ENCODE measurements at regions of chr13 and their contacts with region 1.

Region 1: GRCh38 chr13:99057310-99057975 is 79.6 kb upstream of the DOCK9 start:
- DNase-seq: peak; percentile 89
- H3K4me3 Mint-ChIP-seq: no peak overlapping the region
- H3K27ac Mint-ChIP-seq: peak overlapping the region; percentile 59
- H3K4me1 Mint-ChIP-seq: peaks cover 47% of the 10 kb centered on the region
- H3K27me3 Mint-ChIP-seq: no peaks in the 10 kb centered on the region
- CTCF ChIP-seq: no peak

Region 2: GRCh38 chr13:99045396-99045795 is 12.0 kb before region 1 on chr13:
- CTCF ChIA-PET with region 1: interaction called, 3 read pairs
- POLR2A ChIA-PET with region 1: interaction called, 41 read pairs
- intact Hi-C with region 1: no loop called
- DNase-seq: no peak
- H3K4me3 Mint-ChIP-seq: peak overlapping the region; percentile 13
- H3K27ac Mint-ChIP-seq: peak overlapping the region; percentile 90
- H3K4me1 Mint-ChIP-seq: peaks cover 45% of the 10 kb centered on the region
- H3K27me3 Mint-ChIP-seq: no peaks in the 10 kb centered on the region
- CTCF ChIP-seq: no peak

Region 3: DNA sequence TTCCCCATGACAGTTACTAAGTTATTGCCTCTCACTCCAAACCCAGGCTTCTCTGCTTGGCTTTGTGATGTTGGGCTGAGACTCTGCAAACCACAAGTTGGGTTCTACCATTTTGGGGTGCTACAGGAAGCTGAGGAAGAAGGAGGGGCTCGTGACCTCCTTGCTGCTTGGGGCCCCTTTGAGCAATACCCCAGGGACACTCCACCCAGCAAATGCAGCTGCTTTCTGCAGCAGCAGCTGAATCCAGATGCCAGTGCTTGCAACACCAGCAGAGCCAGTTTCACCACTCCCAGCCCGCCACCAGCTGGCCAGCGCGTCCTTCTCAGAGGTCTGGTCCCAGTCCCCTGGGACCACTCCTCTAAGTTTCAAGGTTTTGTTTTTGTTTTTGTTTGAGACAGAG is 121.2 kb after region 1 on chr13:
- CTCF ChIA-PET with region 1: no interaction called
- POLR2A ChIA-PET with region 1: no interaction called
- intact Hi-C with region 1: no loop called
- DNase-seq: no peak
- H3K4me3 Mint-ChIP-seq: no peak overlapping the region
- H3K27ac Mint-ChIP-seq: no peak overlapping the region
- H3K4me1 Mint-ChIP-seq: peaks cover 6% of the 10 kb centered on the region
- H3K27me3 Mint-ChIP-seq: no peaks in the 10 kb centered on the region
- CTCF ChIP-seq: no peak

Measured in MCF 10A (cell line).